Mammary epithelial cell (primary cell): ENCODE measurements at regions of chr4 and their contacts with region 1.

Region 1: DNA sequence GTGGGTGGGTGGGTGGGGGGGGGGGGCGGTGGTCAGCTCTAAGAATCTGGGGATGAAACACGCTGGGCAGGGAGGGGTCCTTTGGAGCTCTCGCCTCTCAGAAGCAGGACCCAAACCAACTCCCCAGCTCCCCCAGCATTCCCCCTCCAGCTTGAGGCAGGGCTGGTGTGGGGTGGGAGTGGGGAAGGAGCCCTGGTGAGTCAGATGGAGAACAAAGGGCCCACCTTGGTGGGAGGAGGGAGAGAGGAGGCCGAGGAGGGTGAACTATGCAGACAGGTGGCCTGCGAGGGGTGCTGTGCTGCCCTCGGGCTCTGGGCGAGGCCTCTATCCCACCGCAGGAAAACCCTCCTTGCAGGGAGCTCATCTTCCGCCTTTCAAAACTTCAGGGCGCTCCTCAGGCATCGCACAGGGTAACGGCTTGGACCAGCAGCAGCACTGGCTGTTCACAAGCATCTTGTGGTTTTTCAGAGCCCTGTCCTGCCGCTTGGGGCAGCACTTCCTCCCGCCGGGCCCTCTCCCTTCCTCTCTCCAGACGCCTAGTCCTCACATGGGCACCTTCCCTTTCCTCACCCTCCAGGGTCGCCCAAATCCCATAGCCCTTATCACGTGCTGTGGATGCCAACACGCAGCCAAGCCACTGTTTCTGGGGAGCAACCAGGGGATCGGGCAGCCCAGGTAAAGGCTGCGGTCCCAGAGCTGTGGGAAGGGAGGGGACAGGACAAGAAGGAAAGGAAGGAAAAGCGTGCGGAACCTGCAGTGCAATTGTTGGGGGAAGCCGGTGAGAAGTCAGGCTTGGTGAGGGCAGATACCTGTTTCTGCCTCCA is 34.0 kb upstream of the GRPEL1 start:
- DNase-seq: peak; percentile 51
- H3K4me3 ChIP-seq: peak overlapping the region in 1 of 3 experiments; percentile 5
- H3K27ac ChIP-seq: no peak overlapping the region
- H3K4me1 ChIP-seq: peaks cover 10% of the 10 kb centered on the region
- H3K27me3 ChIP-seq: no peaks in the 10 kb centered on the region
- CTCF ChIP-seq: peak; percentile 75 to 76

Region 2: GRCh38 chr4:7186061-7186461 is 84.2 kb after region 1 on chr4:
- CTCF ChIA-PET with region 1: no interaction called
- dilution Hi-C with region 1: no loop called
- in situ Hi-C with region 1: no loop called
- intact Hi-C with region 1: loop called (anchors 2 kb)
- DNase-seq: no peak
- H3K4me3 ChIP-seq: no peak overlapping the region
- H3K27ac ChIP-seq: no peak overlapping the region
- H3K4me1 ChIP-seq: no peaks in the 10 kb centered on the region
- H3K27me3 ChIP-seq: no peaks in the 10 kb centered on the region
- CTCF ChIP-seq: peak in 1 of 2 donors; percentile 46